Activated naive CD4-positive, alpha-beta T cell treated with anti-CD3 and anti-CD28 coated beads for 36 hours (primary cell): ENCODE measurements at regions of chr1 and their contacts with region 1.

Region 1: GRCh38 chr1:110619412-110620249 is 13.5 kb upstream of the KCNA2 start:
- DNase-seq: peak; percentile 89
- H3K4me3 Mint-ChIP-seq: peak overlapping the region; percentile 72
- H3K27ac Mint-ChIP-seq: no peak overlapping the region
- H3K4me1 Mint-ChIP-seq: peaks cover 23% of the 10 kb centered on the region
- H3K27me3 Mint-ChIP-seq: no peaks in the 10 kb centered on the region

Region 2: DNA sequence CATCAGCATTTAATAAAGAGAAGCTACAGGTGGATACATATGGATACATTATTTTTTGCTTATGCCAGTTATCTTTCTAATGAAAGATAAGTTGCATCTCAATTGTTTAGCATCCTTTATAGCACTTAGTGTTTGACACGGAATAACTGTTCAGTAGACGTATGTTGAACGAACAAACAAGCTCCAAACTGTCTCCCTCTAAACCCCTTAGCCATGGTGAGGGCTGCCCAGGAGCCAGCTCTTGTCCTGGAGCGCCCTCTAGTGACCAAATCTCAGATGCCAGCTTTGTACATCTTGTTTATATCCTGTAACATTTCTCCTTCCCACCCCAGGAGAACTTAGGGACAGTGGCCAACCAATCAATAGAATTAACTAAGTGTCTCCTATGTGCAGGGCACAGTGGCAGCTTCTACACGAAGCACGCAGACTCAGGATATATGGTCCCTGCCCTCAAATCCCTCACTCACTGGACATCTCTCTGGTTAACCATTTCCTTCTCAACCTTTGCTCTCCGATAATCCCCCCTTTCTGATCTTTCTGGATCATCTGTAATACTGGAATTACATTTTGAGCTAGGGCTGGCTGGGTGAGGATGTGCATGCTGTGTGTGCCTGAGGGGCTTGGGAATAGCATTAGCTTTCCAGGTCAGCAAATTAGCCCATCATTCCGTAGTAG is 123.6 kb before region 1 on chr1:
- CTCF ChIA-PET with region 1: interaction called, 9 read pairs
- intact Hi-C with region 1: loop called (anchors 1 kb)
- DNase-seq: peak; percentile 91
- H3K4me3 Mint-ChIP-seq: no peak overlapping the region
- H3K27ac Mint-ChIP-seq: peak overlapping the region; percentile 1
- H3K4me1 Mint-ChIP-seq: no peaks in the 10 kb centered on the region
- H3K27me3 Mint-ChIP-seq: no peaks in the 10 kb centered on the region

Region 3: DNA sequence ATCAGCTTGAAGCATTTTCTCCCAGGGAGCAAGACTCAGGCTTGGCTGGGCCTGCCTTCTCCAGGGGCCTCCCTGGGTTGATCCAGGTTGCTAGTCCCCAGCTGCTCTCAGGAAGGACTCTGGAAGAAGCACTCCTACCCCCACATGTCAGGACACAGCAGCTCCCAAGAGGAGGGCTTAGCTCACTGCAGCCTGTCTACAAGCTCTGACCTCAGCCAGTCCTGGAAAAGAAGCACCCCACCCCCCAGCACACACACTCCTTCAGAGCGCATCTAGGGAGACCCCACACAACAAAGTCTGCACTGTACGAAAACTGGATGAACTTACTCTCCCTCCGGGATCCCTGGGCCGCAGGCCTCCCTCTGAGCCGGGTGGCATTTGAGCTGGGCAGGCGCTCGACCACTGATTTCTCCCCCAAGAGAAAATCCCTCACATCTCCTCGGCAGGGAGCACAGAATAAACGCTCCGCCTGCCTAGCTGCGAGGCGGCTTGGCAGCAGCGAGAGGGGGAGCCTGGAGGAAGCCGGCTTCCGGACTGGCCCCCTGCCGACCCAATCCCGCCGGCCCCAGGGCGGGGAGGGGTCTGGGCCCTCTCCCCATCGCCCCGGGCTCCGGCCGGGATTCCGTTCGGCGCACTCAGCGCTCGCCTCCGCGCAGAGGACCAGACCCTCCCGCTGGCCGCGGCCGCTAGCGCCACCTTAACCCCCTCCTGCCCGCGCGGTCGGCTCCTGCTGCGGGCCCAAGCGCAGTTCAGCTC is 13.6 kb before region 1 on chr1 and contains the start of gene KCNA2:
- CTCF ChIA-PET with region 1: interaction called, 11 read pairs
- intact Hi-C with region 1: no loop called
- DNase-seq: no peak
- H3K4me3 Mint-ChIP-seq: peak within 1 kb of the TSS; percentile 75
- H3K27ac Mint-ChIP-seq: no peak within 1 kb of the TSS
- H3K4me1 Mint-ChIP-seq: peaks cover 17% of the 10 kb centered on the region
- H3K27me3 Mint-ChIP-seq: peaks cover 51% of the 10 kb centered on the region
- total RNA-seq, gene KCNA2: 0.19 to 0.64 TPM

Region 4: DNA sequence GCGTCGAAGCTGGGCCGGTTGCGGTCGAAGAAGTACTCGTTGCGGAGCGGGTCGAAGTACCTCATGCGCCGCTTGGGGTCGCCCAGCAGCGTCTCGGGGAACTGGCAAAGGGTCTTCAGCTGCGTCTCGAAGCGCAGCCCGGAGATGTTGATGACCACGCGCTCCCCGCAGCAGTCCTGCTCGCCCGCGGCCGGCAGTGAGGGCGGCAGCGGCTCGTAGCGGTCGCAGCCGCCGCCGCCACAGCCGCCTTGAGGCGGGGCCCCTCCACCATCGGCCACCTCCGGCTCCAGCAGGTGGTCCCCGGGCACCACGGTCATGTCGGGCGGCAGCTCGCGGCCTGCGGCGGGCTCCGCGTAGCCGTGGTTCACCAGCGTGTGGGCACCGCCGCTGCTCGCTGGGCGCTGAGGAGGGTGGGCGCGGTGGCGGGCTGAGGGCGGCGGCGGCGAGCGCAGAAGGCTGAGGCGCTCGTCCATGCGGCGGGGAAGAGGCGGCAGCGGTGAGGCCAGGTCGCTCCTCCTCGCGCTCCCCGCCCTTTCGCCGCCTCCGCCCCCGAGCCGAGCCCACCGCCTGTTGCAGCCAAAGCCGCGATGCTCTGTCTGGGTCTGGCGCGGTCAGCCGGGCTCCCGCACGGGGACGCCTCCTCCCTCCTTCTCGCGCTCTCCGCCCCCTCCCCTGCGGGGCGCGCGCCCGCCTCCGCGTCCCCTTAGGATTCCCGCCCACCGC is 54.9 kb after region 1 on chr1 and contains the start of gene KCNA3:
- CTCF ChIA-PET with region 1: interaction called, 15 read pairs
- intact Hi-C with region 1: no loop called
- DNase-seq: peak; percentile 58
- H3K4me3 Mint-ChIP-seq: peak within 1 kb of the TSS; percentile 96
- H3K27ac Mint-ChIP-seq: peak within 1 kb of the TSS; percentile 92
- H3K4me1 Mint-ChIP-seq: peaks cover 24% of the 10 kb centered on the region
- H3K27me3 Mint-ChIP-seq: no peaks in the 10 kb centered on the region
- total RNA-seq, gene KCNA3: 15.3 to 15.4 TPM

Region 5: DNA sequence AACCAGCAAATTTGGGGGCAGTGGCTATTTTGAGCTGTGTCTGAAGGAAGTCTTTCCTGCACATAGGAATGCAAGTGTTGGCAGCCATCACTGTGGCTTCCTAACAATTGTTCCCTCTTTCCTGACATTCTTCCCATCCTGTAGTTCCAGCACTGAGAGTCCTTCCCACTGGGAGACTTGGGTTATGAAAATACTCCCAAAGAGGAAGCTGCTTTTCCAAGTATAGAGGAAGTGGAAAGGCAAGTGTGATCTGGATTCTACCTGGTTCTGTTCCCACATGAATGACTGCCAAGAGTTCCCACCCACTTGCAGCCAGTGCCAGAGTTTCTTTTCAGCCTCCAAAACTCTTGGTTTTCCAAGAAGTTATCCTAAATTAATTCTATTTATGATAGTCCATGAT is 154.8 kb after region 1 on chr1:
- CTCF ChIA-PET with region 1: interaction called, 194 read pairs
- intact Hi-C with region 1: no loop called
- DNase-seq: no peak
- H3K4me3 Mint-ChIP-seq: no peak overlapping the region
- H3K27ac Mint-ChIP-seq: no peak overlapping the region
- H3K4me1 Mint-ChIP-seq: no peaks in the 10 kb centered on the region
- H3K27me3 Mint-ChIP-seq: no peaks in the 10 kb centered on the region

Region 6: DNA sequence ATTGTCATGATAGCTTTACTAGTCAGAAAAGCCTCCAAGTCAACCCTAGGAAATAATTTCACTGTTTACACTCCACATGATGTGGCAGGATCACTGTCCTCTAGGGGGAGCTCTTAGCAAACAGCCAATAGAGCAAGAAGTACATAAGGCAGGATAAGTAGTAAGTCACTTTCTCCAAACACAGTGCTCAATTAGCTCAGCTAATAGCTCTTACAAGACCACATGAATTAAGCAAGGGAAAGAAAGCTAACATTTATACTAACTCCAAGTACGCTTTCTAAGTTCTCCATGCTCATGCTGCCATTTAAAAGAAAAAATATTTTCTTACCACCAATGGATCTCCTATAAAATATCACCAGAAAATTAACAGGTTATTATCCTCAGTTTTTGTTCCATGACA is 411.0 kb after region 1 on chr1:
- CTCF ChIA-PET with region 1: no interaction called
- intact Hi-C with region 1: loop called (anchors 2 kb)
- DNase-seq: peak; percentile 77
- H3K4me3 Mint-ChIP-seq: no peak overlapping the region
- H3K27ac Mint-ChIP-seq: no peak overlapping the region
- H3K4me1 Mint-ChIP-seq: no peaks in the 10 kb centered on the region
- H3K27me3 Mint-ChIP-seq: peaks cover 9% of the 10 kb centered on the region